Body of pancreas (tissue), 4 donors: ENCODE measurements at regions of chr3 and their contacts with region 1.

Region 1: GRCh38 chr3:138118612-138119422 is 3.4 kb upstream of the DZIP1L start:
- DNase-seq: peak; percentile 81 to 88 (median 82)
- ATAC-seq: peak; percentile 65
- H3K4me3 ChIP-seq: no peak overlapping the region
- H3K27ac ChIP-seq: peak overlapping the region in 2 of 4 donors; percentile 12 to 35
- H3K4me1 ChIP-seq: peaks cover 10% of the 10 kb centered on the region
- H3K27me3 ChIP-seq: no peaks in the 10 kb centered on the region
- CTCF ChIP-seq: peak; percentile 63 to 84 (median 78)
- POLR2A ChIP-seq: no peak

Region 2: GRCh38 chr3:137572931-137573330 is 545.9 kb before region 1 on chr3:
- intact Hi-C with region 1: no loop called
- DNase-seq: no peak
- ATAC-seq: no peak
- H3K4me3 ChIP-seq: no peak overlapping the region
- H3K27ac ChIP-seq: no peak overlapping the region
- H3K4me1 ChIP-seq: no peaks in the 10 kb centered on the region
- H3K27me3 ChIP-seq: no peaks in the 10 kb centered on the region
- CTCF ChIP-seq: no peak
- POLR2A ChIP-seq: no peak

Region 3: GRCh38 chr3:138070006-138070405 is 48.8 kb before region 1 on chr3:
- intact Hi-C with region 1: loop called (anchors 2 kb)
- DNase-seq: peak in 1 of 4 donors; percentile 30
- ATAC-seq: no peak
- H3K4me3 ChIP-seq: no peak overlapping the region
- H3K27ac ChIP-seq: no peak overlapping the region
- H3K4me1 ChIP-seq: no peaks in the 10 kb centered on the region
- H3K27me3 ChIP-seq: no peaks in the 10 kb centered on the region
- CTCF ChIP-seq: no peak
- POLR2A ChIP-seq: no peak

Region 4: DNA sequence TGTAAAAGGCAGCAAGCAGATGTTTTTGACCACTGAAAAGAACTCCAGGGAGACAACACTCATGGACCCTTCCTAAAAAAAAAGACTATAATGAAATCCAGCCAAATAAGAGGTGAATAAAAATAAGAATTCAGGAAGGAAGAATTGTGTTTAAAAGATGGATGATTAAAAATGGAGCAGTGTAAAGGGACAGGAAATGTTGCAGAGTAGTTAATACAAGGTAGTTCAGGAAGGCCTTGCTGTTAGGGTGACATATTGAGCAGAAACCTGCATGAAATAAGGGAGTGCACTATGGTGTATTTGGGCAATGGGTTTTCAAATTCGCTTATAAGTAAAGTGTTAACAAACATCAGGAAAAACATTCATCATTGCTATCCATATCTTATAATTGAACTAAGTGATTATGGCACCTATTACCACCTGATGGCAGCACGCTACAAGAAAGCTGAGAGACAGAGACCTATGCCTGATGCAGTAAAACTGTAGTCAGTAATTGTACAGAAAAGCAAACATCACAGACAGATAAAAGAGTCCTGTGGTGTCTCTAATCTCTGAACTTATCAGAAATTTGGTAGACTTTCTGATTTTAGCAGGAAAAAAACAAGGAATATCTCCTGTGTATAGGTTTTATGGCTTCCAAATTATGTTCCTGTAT is 61.7 kb after region 1 on chr3:
- intact Hi-C with region 1: no loop called
- DNase-seq: peak; percentile 18 to 38 (median 32)
- ATAC-seq: peak; percentile 30
- H3K4me3 ChIP-seq: no peak overlapping the region
- H3K27ac ChIP-seq: no peak overlapping the region
- H3K4me1 ChIP-seq: peaks cover under 1% of the 10 kb centered on the region
- H3K27me3 ChIP-seq: no peaks in the 10 kb centered on the region
- CTCF ChIP-seq: peak in 6 of 7 experiments; percentile 9 to 58 (median 43)
- POLR2A ChIP-seq: no peak

Region 5: GRCh38 chr3:138197058-138197457 is 78.2 kb after region 1 on chr3:
- intact Hi-C with region 1: no loop called
- DNase-seq: peak; percentile 17 to 34 (median 22)
- ATAC-seq: peak; percentile 42
- H3K4me3 ChIP-seq: no peak overlapping the region
- H3K27ac ChIP-seq: no peak overlapping the region
- H3K4me1 ChIP-seq: no peaks in the 10 kb centered on the region
- H3K27me3 ChIP-seq: no peaks in the 10 kb centered on the region
- CTCF ChIP-seq: no peak
- POLR2A ChIP-seq: no peak

Region 6: DNA sequence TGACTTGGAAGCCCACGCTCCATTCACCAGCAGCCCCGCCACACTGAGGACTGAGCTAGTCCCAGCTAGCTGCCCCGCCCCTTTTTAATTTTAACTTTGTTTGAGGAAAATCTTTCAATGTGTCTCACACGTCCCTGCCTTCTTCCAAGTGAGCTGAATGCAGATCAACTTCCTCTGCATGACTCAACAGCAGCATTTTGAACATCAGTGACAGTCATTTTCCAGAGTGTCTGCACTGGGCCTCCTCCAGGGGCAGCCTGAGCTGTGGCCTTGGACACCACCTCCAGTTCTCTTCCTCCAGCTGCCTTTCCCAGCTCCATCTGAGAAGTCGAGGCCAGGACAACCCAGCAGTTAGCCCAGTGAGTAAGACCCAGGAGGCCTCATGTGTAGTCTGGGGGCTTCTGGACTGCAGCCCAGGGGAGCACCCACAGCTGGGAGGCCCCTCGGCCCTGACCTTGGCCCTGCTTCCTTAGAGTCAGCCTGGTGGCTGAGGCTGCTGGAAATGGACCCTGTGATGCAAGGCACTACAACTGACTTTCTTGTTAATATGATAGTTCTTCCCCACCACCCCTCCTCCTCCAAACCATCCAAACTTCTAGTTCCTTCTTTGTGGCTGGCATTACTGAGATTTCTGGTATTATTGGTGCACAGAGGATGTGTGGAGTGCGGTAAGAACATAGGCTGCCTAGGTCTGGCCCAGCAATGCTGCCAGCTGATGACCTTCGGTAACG is 294.2 kb after region 1 on chr3:
- intact Hi-C with region 1: no loop called
- DNase-seq: no peak
- ATAC-seq: no peak
- H3K4me3 ChIP-seq: no peak overlapping the region
- H3K27ac ChIP-seq: peak overlapping the region in 1 of 4 donors; percentile 18
- H3K4me1 ChIP-seq: no peaks in the 10 kb centered on the region
- H3K27me3 ChIP-seq: no peaks in the 10 kb centered on the region
- CTCF ChIP-seq: no peak
- POLR2A ChIP-seq: no peak